ENCODE measurements at regions of chr11 and their contacts with region 1.

Region 1: DNA sequence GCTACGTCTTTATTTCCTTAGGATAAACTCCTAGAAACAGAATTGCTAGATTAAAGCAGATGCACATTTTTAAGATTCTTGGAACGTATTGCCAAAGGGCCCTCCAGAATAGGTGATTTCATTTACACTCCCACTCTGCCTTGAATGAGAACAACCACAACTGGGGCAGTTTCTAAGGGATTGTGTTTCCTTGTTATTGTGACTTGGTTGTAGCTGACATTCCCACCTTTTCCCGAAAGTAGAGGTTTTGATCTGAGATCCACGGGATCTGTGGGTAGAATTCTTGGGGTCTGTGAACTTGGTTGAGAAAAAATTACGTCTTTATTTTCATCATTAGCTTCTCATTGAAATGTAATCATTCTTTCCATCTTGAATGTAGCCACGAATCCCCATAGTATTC is 21.5 kb downstream of the LRRC32 start:
- DNase-seq: no peak
- H3K4me3 ChIP-seq: no peak overlapping the region
- H3K27ac ChIP-seq: no peak overlapping the region
- H3K4me1 ChIP-seq: no peaks in the 10 kb centered on the region
- H3K27me3 ChIP-seq: peaks cover 55% of the 10 kb centered on the region
- CTCF ChIP-seq: no peak

Region 2: DNA sequence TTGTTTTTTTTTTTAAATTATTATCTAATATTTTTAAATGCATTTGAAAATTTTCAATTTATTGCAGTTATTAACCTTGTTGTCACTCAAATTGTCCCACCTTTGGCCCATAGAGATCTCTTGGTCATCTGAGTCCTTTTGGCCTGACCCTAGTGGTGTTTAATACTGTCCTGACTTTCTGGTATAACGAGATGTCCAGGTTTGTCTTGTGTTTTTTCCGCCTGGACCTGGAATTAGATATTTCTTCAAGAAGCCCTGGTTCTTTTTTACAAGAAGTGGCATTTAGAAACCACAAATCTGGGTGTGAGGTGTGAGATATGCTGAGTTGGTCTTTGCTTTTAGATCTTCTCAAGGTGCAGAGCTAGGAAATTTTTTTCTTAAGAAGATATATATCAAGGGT is 16.5 kb before region 1 on chr11:
- CTCF ChIA-PET with region 1: no interaction called
- POLR2A ChIA-PET with region 1: interaction called, 15 read pairs
- intact Hi-C with region 1: no loop called
- DNase-seq: no peak
- H3K4me3 ChIP-seq: no peak overlapping the region
- H3K27ac ChIP-seq: no peak overlapping the region
- H3K4me1 ChIP-seq: no peaks in the 10 kb centered on the region
- H3K27me3 ChIP-seq: peaks cover 34% of the 10 kb centered on the region
- CTCF ChIP-seq: no peak

Region 3: DNA sequence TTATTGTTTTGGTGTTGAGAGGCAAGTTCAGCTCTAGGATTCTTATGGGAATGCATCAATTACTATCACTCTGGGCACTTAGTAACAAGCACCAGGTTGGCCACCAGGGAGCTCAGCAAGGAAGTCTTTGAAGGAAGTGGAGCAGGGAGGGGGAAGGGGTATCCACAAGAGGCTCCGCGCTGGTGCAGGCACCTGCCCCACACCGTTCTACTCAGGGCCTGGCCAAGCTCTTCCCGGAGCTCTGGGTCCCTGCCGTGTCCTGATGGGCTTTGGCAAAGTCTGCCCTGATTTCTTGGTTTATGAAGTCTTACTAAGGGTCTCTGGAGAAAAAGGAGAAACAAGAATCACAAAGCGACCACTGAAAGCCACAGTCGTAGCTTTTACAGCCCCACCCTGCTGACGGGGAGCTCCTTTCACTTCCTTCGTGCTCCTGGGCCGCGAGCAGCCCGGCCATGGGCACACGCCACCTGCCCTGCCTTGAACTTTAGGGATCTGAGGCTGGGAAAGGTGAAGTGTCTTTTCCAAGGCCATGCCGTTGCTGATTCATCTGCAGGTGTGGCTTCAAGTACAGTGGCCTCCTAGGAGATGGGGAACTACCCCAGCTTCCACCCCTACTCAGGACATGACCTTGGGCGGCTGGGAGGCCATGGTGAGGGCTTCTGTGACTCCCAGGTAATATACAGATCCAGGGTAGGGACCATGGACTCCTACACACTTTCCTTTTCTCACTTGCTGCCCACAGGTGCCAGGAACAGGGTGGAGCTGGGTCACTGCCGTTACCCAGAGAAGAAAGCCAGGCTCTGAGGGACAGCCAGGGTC is 37.5 kb after region 1 on chr11:
- CTCF ChIA-PET with region 1: no interaction called
- POLR2A ChIA-PET with region 1: no interaction called
- intact Hi-C with region 1: no loop called
- DNase-seq: no peak
- H3K4me3 ChIP-seq: no peak overlapping the region
- H3K27ac ChIP-seq: no peak overlapping the region
- H3K4me1 ChIP-seq: no peaks in the 10 kb centered on the region
- H3K27me3 ChIP-seq: no peaks in the 10 kb centered on the region
- CTCF ChIP-seq: no peak

Region 4: GRCh38 chr11:76734456-76735420 is 85.7 kb after region 1 on chr11:
- CTCF ChIA-PET with region 1: no interaction called
- POLR2A ChIA-PET with region 1: no interaction called
- intact Hi-C with region 1: no loop called
- DNase-seq: no peak
- H3K4me3 ChIP-seq: no peak overlapping the region
- H3K27ac ChIP-seq: no peak overlapping the region
- H3K4me1 ChIP-seq: no peaks in the 10 kb centered on the region
- H3K27me3 ChIP-seq: no peaks in the 10 kb centered on the region
- CTCF ChIP-seq: no peak

Measured in PC-9 (cell line).